GM12878 (cell line): ENCODE measurements at regions of chr16 and their contacts with region 1.

Region 1: GRCh38 chr16:85554112-85554813 is 58.9 kb upstream of the GSE1 start:
- DNase-seq: peak; percentile 85
- ATAC-seq: peak; percentile 76
- H3K4me3 ChIP-seq: peak overlapping the region; percentile 95
- H3K27ac ChIP-seq: peak overlapping the region; percentile 97
- H3K4me1 ChIP-seq: peaks cover 13% of the 10 kb centered on the region
- H3K27me3 ChIP-seq: no peaks in the 10 kb centered on the region
- CTCF ChIP-seq: no peak
- EP300 ChIP-seq: peak; percentile 65 to 78; a peak in 3 of 4 replicates
- POLR2A ChIP-seq: peak; percentile 72
- RAD21 ChIP-seq: no peak

Region 2: GRCh38 chr16:85377388-85378144 is 176.7 kb before region 1 on chr16:
- CTCF ChIA-PET with region 1: no interaction called
- POLR2A ChIA-PET with region 1: no interaction called
- RAD21 ChIA-PET with region 1: no interaction called
- SMC1A ChIA-PET with region 1: no interaction called
- in situ Hi-C with region 1: no loop called
- intact Hi-C with region 1: no loop called
- DNase-seq: no peak
- ATAC-seq: no peak
- H3K4me3 ChIP-seq: no peak overlapping the region
- H3K27ac ChIP-seq: no peak overlapping the region
- H3K4me1 ChIP-seq: no peaks in the 10 kb centered on the region
- H3K27me3 ChIP-seq: peaks cover 0 to 2% of the 10 kb centered on the region in 2 experiments
- CTCF ChIP-seq: no peak
- EP300 ChIP-seq: no peak
- POLR2A ChIP-seq: no peak
- RAD21 ChIP-seq: no peak

Region 3: GRCh38 chr16:85420501-85421337 is 133.5 kb before region 1 on chr16:
- CTCF ChIA-PET with region 1: interaction called, 12 read pairs
- POLR2A ChIA-PET with region 1: interaction called, 3 read pairs
- RAD21 ChIA-PET with region 1: interaction called, 6 read pairs
- SMC1A ChIA-PET with region 1: no interaction called
- in situ Hi-C with region 1: no loop called
- intact Hi-C with region 1: no loop called
- DNase-seq: no peak
- ATAC-seq: peak; percentile 89
- H3K4me3 ChIP-seq: no peak overlapping the region
- H3K27ac ChIP-seq: no peak overlapping the region
- H3K4me1 ChIP-seq: no peaks in the 10 kb centered on the region
- H3K27me3 ChIP-seq: no peaks in the 10 kb centered on the region; a peak in 1 of 4 replicates
- CTCF ChIP-seq: peak; percentile 96 to 100 (median 98)
- EP300 ChIP-seq: no peak
- POLR2A ChIP-seq: no peak
- RAD21 ChIP-seq: peak; percentile 46; the same call in 1 of the 2 replicates

Region 4: DNA sequence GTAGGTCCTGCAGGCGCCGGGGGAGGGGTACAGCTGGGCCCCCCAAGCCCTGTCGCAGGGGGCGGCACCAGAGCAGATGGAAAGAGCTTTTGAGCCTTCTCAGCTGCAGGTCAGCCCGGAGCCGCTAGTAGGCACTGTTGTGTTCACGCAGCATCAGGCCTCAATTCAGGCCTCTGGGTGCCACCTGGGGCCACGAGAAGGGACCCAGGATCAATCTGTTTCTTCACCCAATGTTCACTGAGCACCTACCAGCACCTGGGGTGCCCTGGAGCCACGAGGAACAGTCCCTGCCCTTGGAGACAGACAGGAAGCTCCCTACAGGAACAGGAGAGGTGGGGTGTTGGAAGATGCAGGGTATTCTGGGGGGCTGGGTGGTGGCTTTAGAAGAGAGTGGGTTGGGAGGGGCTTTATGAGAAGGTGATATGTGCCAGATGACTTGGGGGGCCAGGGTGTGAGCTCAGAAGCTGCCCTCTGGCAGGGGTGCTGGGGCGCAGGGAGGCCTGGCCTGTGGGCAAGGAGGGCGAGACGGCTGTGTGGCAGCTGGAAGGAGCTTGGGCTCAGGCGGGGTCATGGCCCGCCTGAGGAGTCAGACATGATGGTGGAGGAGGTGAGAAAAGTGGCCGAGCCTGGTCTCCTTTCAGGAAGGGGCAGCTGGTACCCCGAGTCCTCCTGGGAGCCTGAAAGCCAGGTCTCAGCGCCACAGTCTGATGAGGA is 63.0 kb before region 1 on chr16:
- CTCF ChIA-PET with region 1: interaction called, 24 read pairs
- POLR2A ChIA-PET with region 1: interaction called, 6 read pairs
- RAD21 ChIA-PET with region 1: interaction called, 19 read pairs
- SMC1A ChIA-PET with region 1: interaction called, 6 read pairs
- in situ Hi-C with region 1: no loop called
- intact Hi-C with region 1: no loop called
- DNase-seq: no peak
- ATAC-seq: peak; percentile 86
- H3K4me3 ChIP-seq: no peak overlapping the region
- H3K27ac ChIP-seq: no peak overlapping the region
- H3K4me1 ChIP-seq: peaks cover 3% of the 10 kb centered on the region; the same call in 1 of the 2 replicates
- H3K27me3 ChIP-seq: peaks cover 0 to 2% of the 10 kb centered on the region in 2 experiments; a peak in 1 of 4 replicates
- CTCF ChIP-seq: peak; percentile 72 to 98 (median 98)
- EP300 ChIP-seq: no peak
- POLR2A ChIP-seq: no peak
- RAD21 ChIP-seq: peak; percentile 67

Region 5: DNA sequence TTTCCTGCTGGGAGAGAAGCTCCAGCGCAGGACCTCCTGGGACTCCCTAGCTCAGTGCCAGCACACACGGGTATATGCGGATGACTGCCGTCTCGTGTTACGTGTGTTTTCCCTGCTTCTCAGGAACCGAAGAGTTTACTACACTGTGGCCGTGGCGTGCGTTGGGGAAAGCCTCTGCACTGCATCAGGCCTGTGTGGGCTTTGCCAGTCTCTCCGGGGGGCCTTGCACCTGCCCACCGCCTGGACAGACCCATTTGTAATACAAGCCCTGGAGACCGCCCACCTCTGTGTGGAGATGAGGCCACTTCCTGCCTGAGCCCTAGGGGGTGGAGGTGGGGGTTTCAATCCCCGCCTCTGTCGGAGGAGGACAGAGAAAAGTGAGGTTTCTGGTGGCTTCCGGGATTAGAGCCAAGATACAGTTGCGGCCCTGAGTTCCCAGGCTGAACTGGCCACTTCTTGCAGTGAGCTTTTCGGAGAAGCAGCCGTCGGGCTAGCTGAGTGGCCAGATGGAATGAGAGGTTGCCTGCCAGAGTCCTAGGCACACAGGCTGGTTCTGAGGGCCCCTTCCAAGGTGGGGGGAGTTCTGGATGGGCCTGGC is 15.5 kb after region 1 on chr16:
- CTCF ChIA-PET with region 1: interaction called, 47 read pairs
- POLR2A ChIA-PET with region 1: interaction called, 53 read pairs
- RAD21 ChIA-PET with region 1: interaction called, 85 read pairs
- SMC1A ChIA-PET with region 1: interaction called, 73 read pairs
- in situ Hi-C with region 1: no loop called
- intact Hi-C with region 1: loop called (anchors 1 kb)
- DNase-seq: peak; percentile 74
- ATAC-seq: peak; percentile 76
- H3K4me3 ChIP-seq: peak overlapping the region; percentile 58
- H3K27ac ChIP-seq: peak overlapping the region; percentile 99
- H3K4me1 ChIP-seq: peaks cover 45% of the 10 kb centered on the region
- H3K27me3 ChIP-seq: no peaks in the 10 kb centered on the region
- CTCF ChIP-seq: no peak
- EP300 ChIP-seq: peak; percentile 32 to 33; a peak in 1 of 4 replicates
- POLR2A ChIP-seq: peak; percentile 74
- RAD21 ChIP-seq: no peak

Region 6: GRCh38 chr16:85615852-85616606 is 61.8 kb after region 1 on chr16:
- CTCF ChIA-PET with region 1: interaction called, 52 read pairs
- POLR2A ChIA-PET with region 1: interaction called, 32 read pairs
- RAD21 ChIA-PET with region 1: interaction called, 56 read pairs
- SMC1A ChIA-PET with region 1: interaction called, 21 read pairs
- in situ Hi-C with region 1: no loop called
- intact Hi-C with region 1: no loop called
- DNase-seq: peak; percentile 47
- ATAC-seq: peak; percentile 68
- H3K4me3 ChIP-seq: peak overlapping the region; percentile 95; the same call in 1 of the 2 replicates
- H3K27ac ChIP-seq: peak overlapping the region; percentile 82
- H3K4me1 ChIP-seq: peaks cover 33% of the 10 kb centered on the region
- H3K27me3 ChIP-seq: no peaks in the 10 kb centered on the region
- CTCF ChIP-seq: peak; percentile 91 to 98 (median 98)
- EP300 ChIP-seq: no peak
- POLR2A ChIP-seq: peak; percentile 53; the same call in 1 of the 2 replicates
- RAD21 ChIP-seq: peak; percentile 61

Region 7: DNA sequence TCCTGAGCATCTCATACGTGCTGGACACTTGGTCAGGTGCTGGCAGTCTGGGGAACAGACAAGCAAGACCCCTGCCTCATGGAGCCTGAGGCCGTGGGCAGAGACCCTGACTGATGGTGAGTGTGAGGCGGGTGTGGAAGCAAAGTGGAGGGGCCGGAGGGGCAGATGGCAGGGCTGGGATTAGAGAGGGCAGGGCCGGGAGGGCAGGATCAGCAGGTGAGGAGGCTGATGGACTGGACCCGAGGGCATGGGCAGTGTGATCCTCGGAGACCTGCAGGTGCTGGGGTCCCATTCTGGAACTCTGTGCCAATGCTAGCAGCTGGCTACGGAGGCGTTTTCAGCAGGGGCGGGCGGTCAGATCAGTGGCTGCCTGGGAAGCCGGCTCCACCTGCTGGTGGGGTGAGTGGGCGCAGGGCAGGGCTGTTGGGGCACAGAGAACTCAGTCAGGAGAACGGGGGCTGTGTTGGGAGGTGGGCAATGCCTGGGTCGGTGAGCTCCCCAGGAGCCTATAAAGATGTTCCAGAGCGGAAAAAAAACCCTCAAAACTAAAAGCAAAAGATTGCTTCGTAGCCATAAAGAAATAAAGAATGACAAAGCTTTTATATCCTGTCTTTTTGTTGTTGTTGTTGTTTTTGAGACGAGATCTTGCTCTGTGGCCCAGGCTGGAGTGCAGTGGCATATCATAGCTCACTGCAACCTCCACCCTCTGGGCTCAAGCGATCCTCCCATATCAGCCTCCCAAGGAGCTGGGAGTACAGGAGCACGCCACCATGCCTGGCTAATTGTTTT is 205.6 kb after region 1 on chr16:
- CTCF ChIA-PET with region 1: no interaction called
- POLR2A ChIA-PET with region 1: no interaction called
- RAD21 ChIA-PET with region 1: interaction called, 5 read pairs
- SMC1A ChIA-PET with region 1: no interaction called
- in situ Hi-C with region 1: no loop called
- intact Hi-C with region 1: loop called (anchors 5 kb)
- DNase-seq: no peak
- ATAC-seq: peak; percentile 62
- H3K4me3 ChIP-seq: no peak overlapping the region
- H3K27ac ChIP-seq: no peak overlapping the region
- H3K4me1 ChIP-seq: peaks cover 46% of the 10 kb centered on the region
- H3K27me3 ChIP-seq: no peaks in the 10 kb centered on the region
- CTCF ChIP-seq: peak; percentile 68 to 90 (median 83)
- EP300 ChIP-seq: no peak
- POLR2A ChIP-seq: no peak
- RAD21 ChIP-seq: peak; percentile 78